ENCODE measurements at regions of chr10 and their contacts with region 1.

Region 1: GRCh38 chr10:118798231-118798662 is 43.5 kb upstream of the CACUL1 start:
- DNase-seq: peak in 1 of 35 experiments; percentile 8
- ATAC-seq: no peak
- H3K4me3 ChIP-seq: no peak overlapping the region
- H3K4me3 Mint-ChIP-seq: no peak overlapping the region
- H3K27ac ChIP-seq: no peak overlapping the region
- H3K27ac Mint-ChIP-seq: no peak overlapping the region
- H3K4me1 ChIP-seq: no peaks in the 10 kb centered on the region
- H3K4me1 Mint-ChIP-seq: no peaks in the 10 kb centered on the region
- H3K27me3 ChIP-seq: peaks cover 0 to 23% of the 10 kb centered on the region in 2 experiments
- H3K27me3 Mint-ChIP-seq: peaks cover 16 to 18% of the 10 kb centered on the region in 2 donors

Region 2: DNA sequence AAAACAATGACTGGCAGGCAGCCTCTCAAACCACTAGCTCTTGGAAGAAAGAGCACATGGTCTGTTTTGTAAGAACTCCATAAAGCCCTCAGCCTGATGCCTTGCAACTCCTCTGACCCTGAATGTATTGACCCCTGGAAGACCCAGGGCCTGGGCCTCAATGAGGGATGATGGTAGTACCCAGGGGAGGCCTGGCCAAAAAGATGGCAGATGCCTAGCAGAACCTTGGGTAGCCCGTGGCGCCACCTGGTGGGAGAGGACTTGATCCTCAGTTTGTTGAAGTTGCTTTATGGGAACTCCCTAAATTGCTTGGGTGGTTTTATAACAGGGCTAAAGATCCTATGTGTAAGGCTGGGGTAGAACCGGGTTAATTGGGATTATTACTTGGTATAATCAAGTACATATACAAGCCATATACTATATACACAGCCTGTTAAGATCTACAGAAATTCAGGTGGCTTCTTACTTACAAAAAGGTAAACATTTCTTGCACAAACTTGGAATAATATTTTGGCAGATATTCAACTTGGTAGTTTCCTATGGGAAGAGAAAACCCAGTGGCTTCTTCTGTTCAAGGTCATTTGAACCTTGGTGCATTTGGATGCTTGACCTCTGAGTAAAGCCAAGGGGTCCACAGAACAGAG is 52.3 kb after region 1 on chr10:
- CTCF ChIA-PET with region 1: no interaction called
- POLR2A ChIA-PET with region 1: interaction called in 1 of 2 experiments, 13 read pairs
- DNase-seq: peak in 34 of 35 experiments; percentile 15 to 67 (median 49)
- ATAC-seq: no peak
- H3K4me3 ChIP-seq: no peak overlapping the region
- H3K4me3 Mint-ChIP-seq: no peak overlapping the region
- H3K27ac ChIP-seq: no peak overlapping the region
- H3K27ac Mint-ChIP-seq: no peak overlapping the region
- H3K4me1 ChIP-seq: no peaks in the 10 kb centered on the region
- H3K4me1 Mint-ChIP-seq: no peaks in the 10 kb centered on the region
- H3K27me3 ChIP-seq: peaks cover 0 to 6% of the 10 kb centered on the region in 2 experiments
- H3K27me3 Mint-ChIP-seq: peaks cover 8 to 11% of the 10 kb centered on the region in 2 donors

Measured in T-cell (primary cell).